Dendritic cell treated with granulocyte-macrophage colony-stimulating factor and Interleukin-4, amounts not matched to agents 40 ng/mL and 50 ng/mL, for 4 days (primary cell): ENCODE measurements at regions of chr11 and their contacts with region 1.

Region 1: GRCh38 chr11:67583247-67584204 is at the start of gene GSTP1:
- H3K4me3 Mint-ChIP-seq: peak within 1 kb of the TSS; percentile 90
- H3K27ac Mint-ChIP-seq: peak within 1 kb of the TSS; percentile 95
- H3K4me1 Mint-ChIP-seq: peaks cover 84% of the 10 kb centered on the region
- H3K27me3 Mint-ChIP-seq: peaks cover 10% of the 10 kb centered on the region

Region 2: GRCh38 chr11:67613960-67614715 is 30.6 kb after region 1 on chr11:
- intact Hi-C with region 1: loop called (anchors 5 kb)
- H3K4me3 Mint-ChIP-seq: peak overlapping the region; percentile 63
- H3K27ac Mint-ChIP-seq: peak overlapping the region; percentile 98
- H3K4me1 Mint-ChIP-seq: peaks cover 36% of the 10 kb centered on the region
- H3K27me3 Mint-ChIP-seq: peaks cover 35% of the 10 kb centered on the region